Psoas muscle (tissue), 8 donors: ENCODE measurements at regions of chr22 and their contacts with region 1.

Region 1: DNA sequence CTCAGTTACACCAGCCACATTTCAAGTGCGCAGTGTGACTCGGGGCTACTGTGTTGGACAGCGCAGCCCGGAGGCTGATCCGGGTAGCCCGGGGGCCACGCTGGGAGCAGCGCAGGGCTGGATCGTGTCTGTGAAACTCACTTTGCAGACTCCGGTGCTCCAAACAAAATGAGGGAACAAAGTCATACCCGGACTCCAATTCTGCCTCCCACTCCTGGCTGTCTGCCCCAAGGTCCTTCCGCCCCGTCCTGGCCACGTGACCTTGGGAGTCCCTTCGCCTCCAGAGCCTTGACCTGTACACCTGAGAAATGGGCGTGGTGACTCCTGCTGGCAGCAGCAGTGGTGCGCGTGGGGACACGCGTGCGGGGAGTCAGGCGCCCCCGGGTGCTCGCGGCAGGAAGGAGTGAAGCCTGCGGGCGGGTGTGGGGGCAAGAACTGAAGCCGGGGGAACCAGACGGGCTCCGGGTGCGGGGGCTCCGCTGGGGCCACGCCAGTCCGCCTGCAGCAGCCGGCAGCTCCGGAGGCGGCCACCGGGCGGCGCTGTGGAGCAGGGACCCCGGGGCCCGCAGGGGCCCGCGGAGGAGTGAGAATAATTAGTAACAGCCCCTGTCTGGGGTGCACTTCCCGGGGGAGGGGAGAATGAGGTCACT is 42.4 kb downstream of the KCNJ4 start:
- DNase-seq: peak in 1 of 2 donors; percentile 50
- ATAC-seq: peak; percentile 48 to 74 (median 58)
- H3K4me3 ChIP-seq: peak overlapping the region; percentile 50
- H3K27ac ChIP-seq: no peak overlapping the region
- H3K4me1 ChIP-seq: peaks cover 14% of the 10 kb centered on the region
- H3K27me3 ChIP-seq: no peaks in the 10 kb centered on the region
- CTCF ChIP-seq: peak; percentile 64

Region 2: DNA sequence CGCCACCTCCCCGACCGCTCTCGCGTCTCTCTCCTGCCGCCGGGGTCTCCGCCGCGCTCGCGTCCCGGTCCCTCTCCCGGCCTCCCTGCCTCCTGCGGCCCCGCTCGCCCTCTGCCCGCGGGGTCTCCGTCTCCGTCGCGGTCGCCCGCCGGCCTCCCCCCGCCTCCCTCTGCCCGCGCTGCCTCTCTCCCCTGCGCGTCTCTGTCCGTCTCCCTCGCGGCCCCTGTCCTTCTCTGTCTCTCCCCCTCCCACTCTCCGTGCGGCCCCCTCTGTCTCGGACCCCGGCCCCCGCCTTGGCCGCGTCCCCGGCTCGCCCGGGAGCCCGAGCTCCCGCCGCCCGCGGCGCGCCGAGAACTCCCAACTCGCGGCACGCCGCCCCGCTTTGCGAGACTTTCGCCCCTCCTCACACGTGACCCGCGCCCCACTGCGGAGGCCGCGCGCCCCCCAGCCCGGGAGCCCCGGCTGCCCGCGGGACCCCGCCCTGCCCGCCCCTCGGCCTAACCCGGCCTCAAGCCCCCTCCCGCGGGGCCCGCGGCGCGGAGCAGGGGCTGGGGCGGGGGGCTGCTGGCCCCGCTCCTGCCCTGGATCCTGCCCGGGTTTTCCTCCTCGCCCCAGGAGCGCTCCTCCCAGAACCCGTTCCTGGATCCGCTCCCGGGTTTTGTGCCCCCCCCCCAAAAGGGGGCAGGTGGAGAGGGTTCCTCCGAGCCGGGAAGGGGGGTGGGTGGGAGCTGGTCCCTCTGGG is 43.1 kb after region 1 on chr22:
- intact Hi-C with region 1: loop called in 1 of 2 experiments (anchors 5 kb)
- DNase-seq: no peak
- ATAC-seq: no peak
- H3K4me3 ChIP-seq: peak overlapping the region; percentile 56
- H3K27ac ChIP-seq: no peak overlapping the region
- H3K4me1 ChIP-seq: no peaks in the 10 kb centered on the region
- H3K27me3 ChIP-seq: peaks cover 0 to 91% (median 19%) of the 10 kb centered on the region in 3 donors
- CTCF ChIP-seq: no peak